ENCODE measurements at regions of chr5 and their contacts with region 1.

Region 1: DNA sequence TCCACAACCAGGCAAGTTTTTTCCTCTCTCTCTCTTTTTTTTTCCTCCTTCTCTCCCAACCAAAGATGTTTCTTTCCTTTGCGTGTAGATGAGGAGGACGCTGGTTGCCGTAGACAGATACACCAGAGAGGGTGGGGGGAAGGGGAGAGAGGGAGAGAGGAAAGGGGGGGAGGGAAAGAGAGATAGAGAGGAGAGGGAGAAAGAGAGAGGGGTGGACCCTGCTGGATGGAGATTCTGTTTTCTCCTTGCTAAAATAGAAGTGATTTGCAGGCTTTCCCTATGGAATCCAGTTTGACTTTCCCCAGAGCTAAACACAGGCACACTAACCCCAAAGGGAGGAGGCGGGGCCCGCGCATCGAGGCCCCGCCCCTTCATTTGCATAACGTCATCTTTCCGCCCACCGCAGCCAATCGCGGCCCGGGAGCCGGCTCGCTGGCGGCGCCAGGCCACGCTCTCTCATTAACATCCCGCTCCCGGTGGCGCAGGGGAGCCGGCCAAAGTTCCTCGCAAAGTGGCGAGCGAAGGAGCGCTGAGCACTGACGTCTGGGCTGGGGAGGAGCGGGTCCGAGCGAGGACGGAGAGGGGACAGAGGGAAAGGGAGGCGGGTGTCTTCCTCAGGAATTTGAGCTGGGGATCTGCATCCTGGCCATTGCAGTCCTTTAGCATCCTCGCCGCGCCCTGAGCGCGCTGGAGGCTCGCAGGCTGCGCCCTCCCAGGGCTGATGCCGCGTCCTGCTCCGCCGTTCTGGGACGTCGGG is 487 bp upstream of the EBF1 start:
- DNase-seq: peak; percentile 91
- H3K4me3 ChIP-seq: peak overlapping the region; percentile 64 to 73
- H3K27ac ChIP-seq: peak overlapping the region; percentile 93 to 95
- H3K4me1 ChIP-seq: peaks cover 7% of the 10 kb centered on the region
- H3K27me3 ChIP-seq: no peaks in the 10 kb centered on the region
- CTCF ChIP-seq: no peak
- POLR2A ChIP-seq: peak; percentile 90

Region 2: GRCh38 chr5:158695595-158696330 is 404.4 kb before region 1 on chr5:
- intact Hi-C with region 1: loop called (anchors 5 kb)
- DNase-seq: peak; percentile 80
- H3K4me3 ChIP-seq: no peak overlapping the region
- H3K27ac ChIP-seq: no peak overlapping the region
- H3K4me1 ChIP-seq: peaks cover 5% of the 10 kb centered on the region
- H3K27me3 ChIP-seq: no peaks in the 10 kb centered on the region
- CTCF ChIP-seq: peak; percentile 89 to 98 (median 94)
- POLR2A ChIP-seq: no peak

Region 3: GRCh38 chr5:159050316-159051143 is 49.7 kb before region 1 on chr5:
- intact Hi-C with region 1: loop called (anchors 5 kb)
- DNase-seq: no peak
- H3K4me3 ChIP-seq: peak overlapping the region in 1 of 2 donors; percentile 30
- H3K27ac ChIP-seq: peak overlapping the region; percentile 70 to 82
- H3K4me1 ChIP-seq: peaks cover 11% of the 10 kb centered on the region
- H3K27me3 ChIP-seq: no peaks in the 10 kb centered on the region
- CTCF ChIP-seq: no peak
- POLR2A ChIP-seq: no peak

Region 4: GRCh38 chr5:159444441-159445082 is 344.4 kb after region 1 on chr5:
- intact Hi-C with region 1: no loop called
- DNase-seq: no peak
- H3K4me3 ChIP-seq: no peak overlapping the region
- H3K27ac ChIP-seq: no peak overlapping the region
- H3K4me1 ChIP-seq: no peaks in the 10 kb centered on the region
- H3K27me3 ChIP-seq: no peaks in the 10 kb centered on the region
- CTCF ChIP-seq: peak in 2 of 3 experiments; percentile 34 to 35
- POLR2A ChIP-seq: no peak